ENCODE measurements at regions of chr11 and their contacts with region 1.

Region 1: DNA sequence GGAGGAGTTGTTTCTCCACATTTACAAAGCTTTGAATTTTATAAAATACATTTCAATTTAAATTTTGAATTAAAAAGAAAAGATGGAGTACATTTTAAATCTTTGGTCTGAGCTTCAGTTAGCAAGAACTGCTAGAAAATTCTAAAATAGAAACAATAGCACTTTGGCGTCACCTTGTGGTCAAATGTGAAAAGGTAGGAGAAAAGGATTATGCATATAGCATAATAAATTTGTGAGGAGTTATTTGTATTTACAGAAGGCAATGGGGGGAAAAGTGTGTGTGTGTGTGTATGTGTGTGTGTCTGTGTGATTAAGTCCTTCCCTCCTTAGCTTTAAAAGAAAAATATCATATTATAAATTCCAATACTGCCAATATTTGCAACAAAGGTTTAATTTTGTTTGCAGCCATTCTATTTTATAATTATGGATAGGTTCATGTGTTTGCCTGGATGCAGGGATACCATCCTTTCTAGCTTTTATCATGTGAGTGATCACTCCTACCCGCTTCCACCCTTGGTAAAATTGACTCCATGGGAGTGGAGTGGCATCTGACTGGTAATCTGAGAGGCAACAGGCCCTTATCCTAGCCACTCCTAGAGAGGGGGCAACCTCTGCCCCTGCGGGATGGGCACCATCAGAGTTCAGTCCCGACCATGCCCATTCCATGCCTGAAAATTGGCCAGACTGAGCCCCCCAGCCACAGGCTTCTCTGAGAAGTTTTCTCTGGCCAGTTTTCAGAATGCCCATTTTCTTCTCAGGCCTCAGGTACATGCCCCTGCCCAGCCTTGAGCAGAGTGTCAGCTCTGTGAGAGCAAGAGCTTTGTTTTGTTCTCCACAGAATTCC is 13.6 kb upstream of the LGR4 start:
- DNase-seq: peak in 1 of 2 experiments; percentile 71
- ATAC-seq: peak; percentile 44 to 75; a peak in 5 of 6 replicates
- H3K4me3 ChIP-seq: no peak overlapping the region
- H3K27ac ChIP-seq: peak overlapping the region; percentile 37 to 48; a peak in 5 of 6 replicates
- H3K4me1 ChIP-seq: peaks cover 12% of the 10 kb centered on the region; the same call in 2 of the 3 replicates
- CTCF ChIP-seq: peak; percentile 98
- EP300 ChIP-seq: no peak
- POLR2A ChIP-seq: no peak
- RAD21 ChIP-seq: peak; percentile 98 to 99

Region 2: DNA sequence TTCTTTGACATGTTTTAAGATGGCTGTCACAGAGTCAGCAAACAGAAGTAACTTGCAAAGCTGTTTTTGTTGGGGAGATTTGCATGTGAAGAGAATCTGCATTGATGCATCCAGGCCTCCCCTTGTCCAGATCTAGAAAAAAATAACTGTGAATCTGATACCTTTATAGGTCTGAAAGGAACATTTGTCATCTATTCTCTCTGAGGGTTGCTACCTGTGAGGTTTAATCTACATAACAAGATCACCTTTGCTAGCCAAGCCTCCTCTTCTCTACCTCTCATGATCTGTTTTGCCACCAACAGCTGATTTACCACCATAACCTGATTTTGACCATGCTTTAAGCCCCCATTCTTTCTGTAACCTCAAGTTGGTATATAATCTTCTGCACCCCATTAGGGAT is 717.1 kb before region 1 on chr11:
- CTCF ChIA-PET with region 1: no interaction called
- POLR2A ChIA-PET with region 1: no interaction called
- DNase-seq: no peak
- ATAC-seq: no peak
- H3K4me3 ChIP-seq: no peak overlapping the region
- H3K27ac ChIP-seq: no peak overlapping the region
- H3K4me1 ChIP-seq: no peaks in the 10 kb centered on the region
- CTCF ChIP-seq: no peak
- EP300 ChIP-seq: no peak
- POLR2A ChIP-seq: no peak
- RAD21 ChIP-seq: no peak

Region 3: DNA sequence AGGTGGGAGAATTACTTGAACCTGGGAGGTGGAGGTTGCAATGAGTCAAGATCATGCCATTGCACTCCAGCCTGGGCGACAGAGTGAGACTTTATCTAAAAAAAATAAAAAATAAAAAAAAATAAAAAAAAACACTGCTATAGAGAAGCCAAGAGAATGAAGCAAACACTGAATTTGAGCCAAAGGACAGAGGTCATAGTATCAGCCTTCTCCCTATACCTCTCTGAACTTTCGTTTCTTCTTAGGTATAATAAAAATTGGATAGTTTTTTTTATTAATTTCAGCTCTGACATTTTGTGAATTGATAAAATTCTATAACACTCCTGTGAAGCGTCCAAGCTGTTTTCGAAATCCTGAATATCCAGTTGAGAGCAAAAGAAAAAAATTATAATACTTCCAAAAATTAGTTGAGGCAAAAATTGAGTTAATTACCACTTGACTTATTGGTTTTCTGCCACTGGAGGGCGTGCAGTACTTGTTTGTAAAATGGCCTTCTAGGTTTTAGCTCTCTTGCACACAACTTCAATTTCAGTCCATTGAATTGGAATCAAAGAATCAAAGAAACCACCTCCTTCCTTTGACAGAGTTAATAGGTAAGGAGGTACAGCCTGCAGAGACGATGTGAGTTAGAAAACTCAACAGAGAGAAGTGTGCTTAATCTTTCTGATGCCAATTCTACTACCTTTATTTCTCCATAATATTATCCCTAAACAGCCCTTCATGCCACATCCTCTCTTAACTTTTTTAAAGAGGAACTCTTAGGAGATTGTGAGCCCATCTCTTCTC is 302.3 kb before region 1 on chr11:
- CTCF ChIA-PET with region 1: interaction called, 146 read pairs
- POLR2A ChIA-PET with region 1: interaction called, 6 read pairs
- DNase-seq: peak; percentile 33 to 78
- ATAC-seq: peak; percentile 34 to 78; a peak in 3 of 6 replicates
- H3K4me3 ChIP-seq: no peak overlapping the region
- H3K27ac ChIP-seq: peak overlapping the region; percentile 32 to 44
- H3K4me1 ChIP-seq: peaks cover 18% of the 10 kb centered on the region
- CTCF ChIP-seq: peak; percentile 95
- EP300 ChIP-seq: no peak
- POLR2A ChIP-seq: no peak
- RAD21 ChIP-seq: peak; percentile 97

Region 4: DNA sequence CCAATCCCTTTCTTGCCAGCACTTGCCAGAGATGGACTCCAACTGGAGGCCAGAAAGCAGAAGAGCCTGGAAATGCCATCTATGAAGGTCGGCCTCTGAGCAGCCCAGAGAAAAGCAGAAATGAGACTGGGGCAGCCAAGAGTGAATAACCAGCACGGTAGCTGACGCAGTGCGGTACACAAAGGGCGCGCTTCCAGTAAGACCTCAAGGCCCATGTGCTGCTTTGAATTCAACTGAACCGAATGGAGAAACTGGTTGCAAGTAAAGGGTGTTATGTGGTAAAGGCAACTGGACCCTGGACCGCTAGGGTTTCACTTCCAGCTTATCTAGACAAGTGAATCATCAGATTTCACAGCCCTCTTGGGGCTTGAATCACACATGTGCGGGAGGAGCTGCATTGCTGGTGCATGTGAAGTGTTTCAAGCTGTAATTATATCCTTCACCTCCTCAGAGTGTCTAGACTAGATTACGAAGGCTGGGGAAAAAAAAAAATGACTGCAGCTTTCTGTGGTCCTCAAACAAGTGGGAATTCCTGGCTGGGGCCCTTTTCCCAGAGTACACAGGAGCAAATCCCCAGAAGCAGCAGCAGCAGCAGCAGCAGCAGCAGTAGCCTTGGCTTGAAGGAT is 252.0 kb before region 1 on chr11:
- CTCF ChIA-PET with region 1: interaction called, 16 read pairs
- POLR2A ChIA-PET with region 1: no interaction called
- DNase-seq: peak; percentile 52 to 82
- ATAC-seq: peak; percentile 94 to 97
- H3K4me3 ChIP-seq: no peak overlapping the region
- H3K27ac ChIP-seq: peak overlapping the region; percentile 72 to 82
- H3K4me1 ChIP-seq: peaks cover 25% of the 10 kb centered on the region
- CTCF ChIP-seq: no peak
- EP300 ChIP-seq: peak; percentile 19 to 24; a peak in 1 of 5 replicates
- POLR2A ChIP-seq: no peak
- RAD21 ChIP-seq: peak in 1 of 2 experiments; percentile 32; a peak in 2 of 5 replicates

Region 5: DNA sequence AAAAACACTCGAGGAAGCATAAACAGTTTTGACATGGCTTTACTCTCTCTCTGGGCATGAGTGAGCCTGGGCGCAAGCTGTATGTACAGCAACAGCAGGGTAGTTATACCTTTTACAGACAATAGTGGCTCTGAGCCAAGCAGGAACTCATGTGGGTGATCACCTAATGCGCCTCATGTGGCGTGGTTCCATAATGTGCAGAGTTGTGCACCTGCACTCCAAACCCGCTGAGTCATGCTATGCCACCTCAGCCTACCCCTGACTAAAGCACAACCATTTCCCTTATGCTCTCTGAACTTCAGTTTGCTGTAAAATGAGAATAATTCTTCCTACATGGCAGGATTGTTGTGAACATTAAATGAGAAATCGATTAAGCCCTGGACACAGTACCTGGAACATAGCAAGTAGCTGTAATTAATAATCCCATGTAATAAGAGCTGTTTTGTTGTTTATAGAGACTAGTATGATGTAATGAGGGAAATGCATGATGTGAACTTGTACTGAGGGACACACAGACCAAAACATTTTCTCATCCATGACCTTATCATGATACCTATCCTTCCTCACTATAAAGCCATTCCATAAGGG is 194.8 kb before region 1 on chr11:
- CTCF ChIA-PET with region 1: interaction called, 37 read pairs
- POLR2A ChIA-PET with region 1: no interaction called
- DNase-seq: peak in 1 of 2 experiments; percentile 67
- ATAC-seq: no peak
- H3K4me3 ChIP-seq: no peak overlapping the region
- H3K27ac ChIP-seq: peak overlapping the region in 1 of 2 experiments; percentile 14; a peak in 1 of 6 replicates
- H3K4me1 ChIP-seq: no peaks in the 10 kb centered on the region
- CTCF ChIP-seq: no peak
- EP300 ChIP-seq: no peak
- POLR2A ChIP-seq: no peak
- RAD21 ChIP-seq: no peak

Region 6: GRCh38 chr11:27313157-27313821 is 172.9 kb before region 1 on chr11:
- CTCF ChIA-PET with region 1: interaction called, 11 read pairs
- POLR2A ChIA-PET with region 1: no interaction called
- DNase-seq: no peak
- ATAC-seq: no peak
- H3K4me3 ChIP-seq: no peak overlapping the region
- H3K27ac ChIP-seq: peak overlapping the region; percentile 61 to 68
- H3K4me1 ChIP-seq: peaks cover 49% of the 10 kb centered on the region
- CTCF ChIP-seq: no peak
- EP300 ChIP-seq: no peak
- POLR2A ChIP-seq: no peak
- RAD21 ChIP-seq: no peak

Region 7: GRCh38 chr11:27443746-27444507 is 42.2 kb before region 1 on chr11:
- CTCF ChIA-PET with region 1: interaction called, 13 read pairs
- POLR2A ChIA-PET with region 1: no interaction called
- DNase-seq: no peak
- ATAC-seq: no peak
- H3K4me3 ChIP-seq: no peak overlapping the region
- H3K27ac ChIP-seq: no peak overlapping the region
- H3K4me1 ChIP-seq: peaks cover 61% of the 10 kb centered on the region
- CTCF ChIP-seq: no peak
- EP300 ChIP-seq: no peak
- POLR2A ChIP-seq: no peak
- RAD21 ChIP-seq: no peak

Region 8: DNA sequence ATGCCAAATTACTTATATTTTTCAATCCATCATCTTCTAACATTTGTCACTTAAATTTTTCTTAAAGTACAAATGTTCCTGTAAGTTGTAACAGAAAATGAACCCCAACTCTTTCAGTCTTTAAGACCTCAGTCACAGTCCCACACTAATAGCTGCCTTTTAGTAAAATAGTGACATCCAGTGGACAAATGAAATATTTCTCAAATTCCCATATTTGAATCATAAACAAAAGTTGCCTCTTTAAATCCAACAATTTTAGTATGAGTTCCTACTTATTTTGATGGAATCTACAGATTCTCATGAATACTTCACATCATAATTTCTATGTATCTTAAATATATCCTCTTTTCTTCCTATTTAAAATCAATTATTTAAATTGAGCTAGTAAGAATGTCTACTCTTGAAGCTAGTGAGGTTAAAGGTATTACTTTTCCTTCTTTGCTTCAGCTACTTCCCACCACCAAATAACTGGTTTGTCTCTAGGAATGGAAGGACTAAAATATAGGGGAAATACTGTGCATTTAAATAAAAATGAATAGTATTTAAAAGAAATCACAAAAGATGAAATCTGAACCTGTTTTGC is 11.2 kb after region 1 on chr11:
- CTCF ChIA-PET with region 1: interaction called, 73 read pairs
- POLR2A ChIA-PET with region 1: interaction called, 6 read pairs
- DNase-seq: peak in 1 of 2 experiments; percentile 33
- ATAC-seq: peak; percentile 50 to 79; a peak in 4 of 6 replicates
- H3K4me3 ChIP-seq: no peak overlapping the region
- H3K27ac ChIP-seq: no peak overlapping the region
- H3K4me1 ChIP-seq: peaks cover 15% of the 10 kb centered on the region
- CTCF ChIP-seq: peak; percentile 80
- EP300 ChIP-seq: no peak
- POLR2A ChIP-seq: no peak
- RAD21 ChIP-seq: peak; percentile 66 to 71; a peak in 4 of 5 replicates

Region 9: GRCh38 chr11:27563201-27563600 is 77.0 kb after region 1 on chr11:
- CTCF ChIA-PET with region 1: no interaction called
- POLR2A ChIA-PET with region 1: no interaction called
- DNase-seq: no peak
- ATAC-seq: no peak
- H3K4me3 ChIP-seq: no peak overlapping the region
- H3K27ac ChIP-seq: no peak overlapping the region
- H3K4me1 ChIP-seq: no peaks in the 10 kb centered on the region
- CTCF ChIP-seq: no peak
- EP300 ChIP-seq: no peak
- POLR2A ChIP-seq: no peak
- RAD21 ChIP-seq: no peak

Region 10: DNA sequence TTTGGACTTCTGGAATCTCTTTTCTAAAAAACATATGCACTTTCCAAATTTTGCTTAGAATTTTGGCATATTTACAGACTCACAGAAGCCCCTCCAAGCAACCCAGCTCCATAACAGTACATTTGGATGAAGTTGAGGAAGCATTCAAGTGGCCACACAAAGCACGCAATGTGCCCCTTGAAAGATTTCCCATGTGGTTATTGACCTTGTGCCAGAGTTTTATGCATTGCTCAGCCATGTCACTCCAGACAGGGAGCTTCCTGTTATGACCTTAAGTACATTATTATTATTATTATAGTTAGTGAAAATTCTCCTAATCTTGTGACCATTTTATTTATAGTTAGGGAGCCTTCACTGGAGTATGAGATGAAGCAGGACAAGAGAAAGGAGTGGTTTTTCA is 249.1 kb after region 1 on chr11:
- CTCF ChIA-PET with region 1: no interaction called
- POLR2A ChIA-PET with region 1: no interaction called
- DNase-seq: no peak
- ATAC-seq: no peak
- H3K4me3 ChIP-seq: no peak overlapping the region
- H3K27ac ChIP-seq: no peak overlapping the region
- H3K4me1 ChIP-seq: no peaks in the 10 kb centered on the region
- CTCF ChIP-seq: no peak
- EP300 ChIP-seq: no peak
- POLR2A ChIP-seq: no peak
- RAD21 ChIP-seq: no peak